ENCODE measurements at regions of chr1 and their contacts with region 1.

Region 1: DNA sequence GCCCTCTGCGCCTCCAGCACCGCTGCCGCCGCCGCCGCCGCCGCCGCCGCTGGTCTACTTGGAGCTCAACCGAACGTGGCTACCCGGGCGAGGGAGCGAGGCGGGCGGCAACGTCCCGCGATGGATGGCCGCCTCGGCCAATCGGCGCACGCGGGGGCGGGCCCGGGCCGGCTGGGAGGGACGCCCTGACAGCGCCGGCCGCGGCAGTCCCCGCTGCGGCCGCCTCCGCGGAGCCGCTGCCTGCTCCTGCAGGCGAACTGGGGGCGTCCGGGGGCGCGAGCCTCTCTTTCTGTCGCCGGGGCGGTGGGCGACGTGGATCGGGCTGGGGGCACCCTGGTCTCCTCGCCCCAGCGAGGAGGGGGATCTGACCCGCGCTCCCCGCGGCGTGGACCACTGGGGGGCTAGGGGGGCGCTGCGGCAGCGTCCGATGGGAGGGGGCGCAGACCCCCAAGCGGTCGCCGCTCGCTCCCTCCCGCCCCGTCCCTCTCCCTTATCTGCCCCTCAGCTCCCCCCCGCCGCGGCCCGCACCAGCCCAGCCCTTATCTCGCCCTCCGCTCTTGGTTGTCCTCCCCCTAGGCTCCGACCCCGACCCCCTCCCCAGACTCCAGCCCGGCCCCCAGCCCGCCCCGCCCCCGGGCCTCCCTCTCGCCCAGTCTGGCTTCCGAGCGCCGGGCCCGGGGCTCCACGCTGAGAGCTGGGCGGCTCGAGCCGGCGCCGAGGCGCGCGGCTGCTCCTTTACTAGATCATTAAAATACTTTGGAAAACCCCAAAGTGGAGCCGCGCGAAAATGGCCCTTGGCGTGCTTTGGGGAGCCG is at the start of gene SSBP3:
- DNase-seq: peak; percentile 87 to 88
- H3K4me3 ChIP-seq: peak within 1 kb of the TSS; percentile 94 to 99 (median 96)
- H3K27ac ChIP-seq: peak within 1 kb of the TSS; percentile 89 to 98
- H3K4me1 ChIP-seq: peaks cover 12 to 23% of the 10 kb centered on the region in 2 donors
- H3K27me3 ChIP-seq: no peaks in the 10 kb centered on the region
- CTCF ChIP-seq: no peak
- POLR2A ChIP-seq: no peak
- total RNA-seq, gene SSBP3: 21.3 to 28.0 (median 25.6) TPM

Region 2: GRCh38 chr1:53765657-53766056 is 640.9 kb before region 1 on chr1:
- intact Hi-C with region 1: no loop called
- DNase-seq: no peak
- H3K4me3 ChIP-seq: no peak overlapping the region
- H3K27ac ChIP-seq: no peak overlapping the region
- H3K4me1 ChIP-seq: no peaks in the 10 kb centered on the region
- H3K27me3 ChIP-seq: no peaks in the 10 kb centered on the region
- CTCF ChIP-seq: no peak
- POLR2A ChIP-seq: no peak

Region 3: GRCh38 chr1:54268762-54269297 is 137.7 kb before region 1 on chr1:
- intact Hi-C with region 1: loop called (anchors 10 kb)
- DNase-seq: peak in 1 of 2 donors; percentile 54
- H3K4me3 ChIP-seq: no peak overlapping the region
- H3K27ac ChIP-seq: peak overlapping the region; percentile 59 to 62
- H3K4me1 ChIP-seq: peaks cover 6 to 12% of the 10 kb centered on the region in 2 donors
- H3K27me3 ChIP-seq: no peaks in the 10 kb centered on the region
- CTCF ChIP-seq: no peak
- POLR2A ChIP-seq: no peak

Region 4: GRCh38 chr1:54488779-54489626 is 82.5 kb after region 1 on chr1:
- intact Hi-C with region 1: loop called (anchors 2 kb)
- DNase-seq: peak; percentile 76
- H3K4me3 ChIP-seq: peak overlapping the region; percentile 59 to 84 (median 59)
- H3K27ac ChIP-seq: peak overlapping the region; percentile 97 to 99
- H3K4me1 ChIP-seq: peaks cover 0 to 5% of the 10 kb centered on the region in 2 donors
- H3K27me3 ChIP-seq: no peaks in the 10 kb centered on the region
- CTCF ChIP-seq: peak; percentile 96 to 98 (median 97)
- POLR2A ChIP-seq: no peak

Region 5: GRCh38 chr1:54800899-54801759 is 394.6 kb after region 1 on chr1 and contains the start of gene TTC22:
- intact Hi-C with region 1: loop called (anchors 10 kb)
- DNase-seq: peak; percentile 70 to 76
- H3K4me3 ChIP-seq: peak within 1 kb of the TSS; percentile 19 to 73 (median 65)
- H3K27ac ChIP-seq: peak within 1 kb of the TSS; percentile 78 to 80
- H3K4me1 ChIP-seq: peaks cover 0 to 7% of the 10 kb centered on the region in 2 donors
- H3K27me3 ChIP-seq: no peaks in the 10 kb centered on the region
- CTCF ChIP-seq: peak in 2 of 3 donors; percentile 17 to 73
- POLR2A ChIP-seq: no peak
- total RNA-seq, gene TTC22: 0.32 to 15.8 (median 7.9) TPM

Measured in breast epithelium (tissue), 4 donors.